Adrenal gland (tissue), 19 donors: ENCODE measurements at regions of chr5 and their contacts with region 1.

Region 1: GRCh38 chr5:151659001-151659754 is 27.5 kb downstream of the SPARC start:
- DNase-seq: peak; percentile 76 to 90 (median 84)
- H3K4me3 ChIP-seq: no peak overlapping the region
- H3K27ac ChIP-seq: peak overlapping the region in 2 of 5 donors; percentile 9 to 21
- H3K4me1 ChIP-seq: peaks cover 4 to 31% of the 10 kb centered on the region in 2 donors
- H3K27me3 ChIP-seq: no peaks in the 10 kb centered on the region
- CTCF ChIP-seq: peak; percentile 78 to 94 (median 89)
- POLR2A ChIP-seq: no peak

Region 2: DNA sequence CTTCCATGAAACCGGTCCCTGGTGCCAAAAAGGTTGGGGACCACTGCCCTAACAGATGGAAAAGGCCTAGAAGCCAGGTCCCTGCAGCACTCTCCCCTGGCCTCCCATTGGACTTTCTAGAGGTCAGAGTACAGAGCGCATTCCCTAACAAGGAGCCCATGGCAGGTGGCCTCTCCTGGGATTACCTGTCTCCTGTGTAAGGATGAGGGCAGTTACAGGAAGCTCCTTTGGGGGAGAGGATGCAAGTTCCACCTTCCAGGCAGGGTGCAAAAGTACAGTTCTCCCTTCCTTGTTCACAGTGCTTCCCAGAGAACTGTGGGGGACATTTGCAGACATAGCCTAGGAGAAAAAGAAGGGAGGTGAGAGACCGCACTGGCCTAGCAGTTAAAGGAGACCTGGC is 149.3 kb before region 1 on chr5:
- intact Hi-C with region 1: loop called in 1 of 2 experiments (anchors 10 kb)
- DNase-seq: no peak
- H3K4me3 ChIP-seq: no peak overlapping the region
- H3K27ac ChIP-seq: no peak overlapping the region
- H3K4me1 ChIP-seq: no peaks in the 10 kb centered on the region
- H3K27me3 ChIP-seq: no peaks in the 10 kb centered on the region
- CTCF ChIP-seq: no peak
- POLR2A ChIP-seq: no peak

Region 3: DNA sequence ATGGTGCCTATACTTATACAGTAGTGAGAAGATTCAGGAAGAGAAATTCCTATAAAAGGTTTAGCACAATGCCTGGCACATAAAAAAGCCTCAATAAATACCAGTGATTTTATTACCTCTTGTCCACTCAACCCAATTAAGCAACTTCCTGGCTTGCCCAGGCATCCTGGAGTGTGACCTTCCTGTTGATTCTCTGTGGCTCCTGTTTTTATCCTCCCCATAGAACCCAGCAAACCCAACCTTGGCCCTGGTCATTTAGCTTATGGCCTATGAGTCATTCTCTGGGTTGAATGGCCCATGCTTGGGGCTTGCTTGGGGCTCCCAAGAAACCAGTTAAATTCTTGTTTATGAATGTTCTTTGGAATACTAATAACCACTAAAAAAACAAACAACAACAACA is 48.9 kb after region 1 on chr5:
- intact Hi-C with region 1: no loop called
- DNase-seq: peak in 4 of 7 donors; percentile 30 to 54 (median 46)
- H3K4me3 ChIP-seq: no peak overlapping the region
- H3K27ac ChIP-seq: peak overlapping the region in 2 of 5 donors; percentile 13 to 51
- H3K4me1 ChIP-seq: peaks cover 3 to 12% of the 10 kb centered on the region in 2 donors
- H3K27me3 ChIP-seq: no peaks in the 10 kb centered on the region
- CTCF ChIP-seq: no peak
- POLR2A ChIP-seq: no peak

Region 4: GRCh38 chr5:151719228-151720000 is 60.2 kb after region 1 on chr5:
- intact Hi-C with region 1: loop called (anchors 5 kb)
- DNase-seq: peak; percentile 66 to 82 (median 74)
- H3K4me3 ChIP-seq: no peak overlapping the region
- H3K27ac ChIP-seq: peak overlapping the region in 2 of 5 donors; percentile 20 to 53
- H3K4me1 ChIP-seq: no peaks in the 10 kb centered on the region
- H3K27me3 ChIP-seq: no peaks in the 10 kb centered on the region
- CTCF ChIP-seq: peak; percentile 67 to 82 (median 70)
- POLR2A ChIP-seq: no peak